ENCODE measurements at regions of chr1 and their contacts with region 1.

Region 1: GRCh38 chr1:86774305-86775295 is 70.2 kb downstream of the SH3GLB1 start:
- H3K4me3 Mint-ChIP-seq: peak overlapping the region; percentile 56
- H3K27ac Mint-ChIP-seq: peak overlapping the region; percentile 93
- H3K4me1 Mint-ChIP-seq: peaks cover 48% of the 10 kb centered on the region
- H3K27me3 Mint-ChIP-seq: no peaks in the 10 kb centered on the region

Region 2: DNA sequence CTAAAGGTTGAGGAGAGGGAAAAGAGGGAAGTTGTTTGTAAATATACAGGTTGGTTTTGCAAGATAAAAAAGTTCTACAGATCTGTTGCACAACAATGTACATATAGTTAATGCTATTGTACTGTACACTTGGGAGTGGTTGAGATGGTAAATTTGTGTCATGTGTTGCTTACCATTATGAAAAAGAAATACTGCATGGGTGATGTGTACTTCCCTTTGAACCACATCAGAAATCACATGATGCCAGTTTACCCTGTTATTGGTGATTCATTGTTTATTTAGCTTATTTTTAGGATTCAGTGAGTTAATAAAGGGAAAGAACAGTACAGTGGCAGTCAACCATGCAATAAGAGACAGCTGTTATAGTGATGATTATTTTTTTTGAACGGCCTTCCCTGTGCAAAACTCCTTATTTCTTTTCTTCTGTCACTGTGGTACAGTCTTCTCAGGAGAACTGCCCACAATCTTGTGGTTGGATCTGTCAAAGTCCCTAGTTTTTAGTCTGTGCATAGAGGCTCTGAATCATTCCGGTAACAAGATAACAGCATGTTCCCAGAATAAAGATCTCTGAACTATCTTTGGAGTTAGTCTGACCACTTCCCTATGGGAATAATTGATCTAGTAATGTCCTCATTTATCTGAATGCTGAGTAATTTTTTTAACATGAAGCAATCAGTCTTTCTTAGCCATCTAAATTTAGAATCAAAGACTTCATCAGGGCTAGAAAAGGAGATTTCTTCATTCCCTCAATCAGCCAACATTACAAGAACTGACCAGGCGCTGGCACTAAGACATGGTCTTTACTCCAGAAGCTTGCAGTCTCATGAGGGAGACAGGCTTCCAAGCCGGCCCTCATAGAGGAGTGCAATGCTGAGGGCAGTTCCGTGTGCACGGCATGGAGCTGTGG is 14.0 kb after region 1 on chr1:
- intact Hi-C with region 1: loop called (anchors 2 kb)
- H3K4me3 Mint-ChIP-seq: no peak overlapping the region
- H3K27ac Mint-ChIP-seq: peak overlapping the region; percentile 65
- H3K4me1 Mint-ChIP-seq: peaks cover 40% of the 10 kb centered on the region
- H3K27me3 Mint-ChIP-seq: no peaks in the 10 kb centered on the region